ENCODE measurements at regions of chr9 and their contacts with region 1.

Region 1: GRCh38 chr9:112074250-112075008 is 100.7 kb downstream of the SUSD1 start:
- DNase-seq: peak; percentile 70
- H3K4me3 Mint-ChIP-seq: no peak overlapping the region
- H3K27ac Mint-ChIP-seq: peak overlapping the region; percentile 93
- H3K4me1 Mint-ChIP-seq: peaks cover 50% of the 10 kb centered on the region
- H3K27me3 Mint-ChIP-seq: no peaks in the 10 kb centered on the region
- CTCF ChIP-seq: peak; percentile 44

Region 2: GRCh38 chr9:111815277-111816070 is 259.0 kb before region 1 on chr9:
- CTCF ChIA-PET with region 1: interaction called, 4 read pairs
- intact Hi-C with region 1: loop called (anchors 5 kb)
- DNase-seq: peak; percentile 36
- H3K4me3 Mint-ChIP-seq: peak overlapping the region; percentile 50
- H3K27ac Mint-ChIP-seq: peak overlapping the region; percentile 90
- H3K4me1 Mint-ChIP-seq: peaks cover 28% of the 10 kb centered on the region
- H3K27me3 Mint-ChIP-seq: no peaks in the 10 kb centered on the region
- CTCF ChIP-seq: no peak

Region 3: DNA sequence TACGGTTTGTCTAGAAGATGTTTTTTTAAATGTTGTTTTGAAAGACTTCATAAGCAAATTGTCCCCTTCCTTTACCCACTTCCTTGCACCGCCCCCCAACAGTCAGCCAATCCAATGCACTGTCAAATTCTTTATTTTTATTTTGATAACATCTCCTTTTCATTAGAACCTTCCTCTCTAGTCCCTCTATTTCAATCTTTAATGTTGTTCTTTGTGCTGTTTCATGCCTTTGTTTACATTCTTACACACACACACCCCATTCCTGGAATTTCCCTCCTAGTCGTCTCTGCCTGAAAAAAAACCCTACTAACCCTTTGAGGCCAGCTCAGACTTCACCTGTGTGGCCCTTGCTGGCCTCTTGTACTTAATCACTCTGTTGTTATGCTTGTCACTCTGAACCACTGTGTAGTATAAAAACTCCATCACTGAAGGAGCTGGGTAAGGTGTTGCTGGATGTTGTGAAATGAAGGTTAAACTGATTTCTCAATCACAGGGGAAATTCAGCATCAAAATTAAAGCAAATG is 44.4 kb before region 1 on chr9:
- CTCF ChIA-PET with region 1: interaction called, 12 read pairs
- intact Hi-C with region 1: loop called (anchors 5 kb)
- DNase-seq: peak; percentile 71
- H3K4me3 Mint-ChIP-seq: peak overlapping the region; percentile 12
- H3K27ac Mint-ChIP-seq: peak overlapping the region; percentile 86
- H3K4me1 Mint-ChIP-seq: peaks cover 55% of the 10 kb centered on the region
- H3K27me3 Mint-ChIP-seq: no peaks in the 10 kb centered on the region
- CTCF ChIP-seq: no peak

Measured in Calu3 (cell line).